Activated naive CD4-positive, alpha-beta T cell treated with anti-CD3 and anti-CD28 coated beads for 36 hours (primary cell): ENCODE measurements at regions of chr6 and their contacts with region 1.

Region 1: GRCh38 chr6:36623547-36624459 is 29.6 kb downstream of the SRSF3 start:
- DNase-seq: peak; percentile 91
- H3K4me3 Mint-ChIP-seq: no peak overlapping the region
- H3K27ac Mint-ChIP-seq: no peak overlapping the region
- H3K4me1 Mint-ChIP-seq: peaks cover 14% of the 10 kb centered on the region
- H3K27me3 Mint-ChIP-seq: no peaks in the 10 kb centered on the region

Region 2: GRCh38 chr6:36576561-36576960 is 47.2 kb before region 1 on chr6:
- CTCF ChIA-PET with region 1: no interaction called
- intact Hi-C with region 1: no loop called
- DNase-seq: no peak
- H3K4me3 Mint-ChIP-seq: no peak overlapping the region
- H3K27ac Mint-ChIP-seq: no peak overlapping the region
- H3K4me1 Mint-ChIP-seq: peaks cover 6% of the 10 kb centered on the region
- H3K27me3 Mint-ChIP-seq: no peaks in the 10 kb centered on the region

Region 3: GRCh38 chr6:36594029-36594815 is 29.6 kb before region 1 on chr6 and contains the start of gene SRSF3:
- CTCF ChIA-PET with region 1: no interaction called
- intact Hi-C with region 1: no loop called
- DNase-seq: peak; percentile 98
- H3K4me3 Mint-ChIP-seq: peak within 1 kb of the TSS; percentile 92
- H3K27ac Mint-ChIP-seq: peak within 1 kb of the TSS; percentile 98
- H3K4me1 Mint-ChIP-seq: peaks cover 31% of the 10 kb centered on the region
- H3K27me3 Mint-ChIP-seq: no peaks in the 10 kb centered on the region
- total RNA-seq, gene SRSF3: 250 to 269 TPM

Region 4: GRCh38 chr6:36724514-36725390 is 100.9 kb after region 1 on chr6:
- CTCF ChIA-PET with region 1: interaction called, 11 read pairs
- intact Hi-C with region 1: loop called (anchors 1 kb)
- DNase-seq: peak; percentile 88
- H3K4me3 Mint-ChIP-seq: no peak overlapping the region
- H3K27ac Mint-ChIP-seq: no peak overlapping the region
- H3K4me1 Mint-ChIP-seq: peaks cover 13% of the 10 kb centered on the region
- H3K27me3 Mint-ChIP-seq: no peaks in the 10 kb centered on the region

Region 5: GRCh38 chr6:36735110-36736071 is 111.6 kb after region 1 on chr6:
- CTCF ChIA-PET with region 1: interaction called, 3 read pairs
- intact Hi-C with region 1: loop called (anchors 1 kb)
- DNase-seq: peak; percentile 87
- H3K4me3 Mint-ChIP-seq: peak overlapping the region; percentile 59
- H3K27ac Mint-ChIP-seq: peak overlapping the region; percentile 91
- H3K4me1 Mint-ChIP-seq: peaks cover 28% of the 10 kb centered on the region
- H3K27me3 Mint-ChIP-seq: no peaks in the 10 kb centered on the region

Region 6: GRCh38 chr6:36780442-36781177 is 156.8 kb after region 1 on chr6:
- CTCF ChIA-PET with region 1: interaction called, 20 read pairs
- intact Hi-C with region 1: loop called (anchors 2 kb)
- DNase-seq: no peak
- H3K4me3 Mint-ChIP-seq: no peak overlapping the region
- H3K27ac Mint-ChIP-seq: no peak overlapping the region
- H3K4me1 Mint-ChIP-seq: no peaks in the 10 kb centered on the region
- H3K27me3 Mint-ChIP-seq: no peaks in the 10 kb centered on the region

Region 7: DNA sequence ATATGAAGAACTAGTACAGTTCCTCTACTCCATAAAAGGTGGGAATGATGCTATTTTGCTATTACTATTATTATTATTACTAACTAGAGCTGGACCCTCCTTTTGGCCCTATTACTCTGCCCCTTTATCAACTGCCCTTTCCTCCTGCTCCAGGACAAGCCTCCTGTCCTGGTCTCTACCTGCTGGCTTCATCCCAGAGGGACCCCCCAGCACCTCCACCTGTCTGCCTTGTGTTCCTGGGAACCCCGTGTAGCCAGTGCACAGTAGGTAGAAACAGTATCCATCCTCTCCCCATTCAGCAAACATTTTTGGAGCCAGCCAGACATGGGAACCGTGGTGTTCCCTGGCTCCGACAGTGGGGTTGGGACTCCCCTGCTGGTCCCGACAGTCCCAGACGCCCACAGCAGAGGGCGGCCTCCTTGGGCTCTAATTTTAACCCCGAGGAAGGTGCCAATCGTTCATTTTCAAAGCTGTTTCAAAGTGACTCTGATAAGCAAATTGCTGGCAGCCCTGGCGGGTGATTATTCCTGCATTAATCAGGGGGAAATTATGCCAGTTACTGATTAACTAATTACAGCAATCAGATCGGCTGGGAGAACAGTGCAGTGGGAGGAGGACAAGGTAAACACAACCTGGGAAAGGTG is 1118.1 kb after region 1 on chr6:
- CTCF ChIA-PET with region 1: no interaction called
- intact Hi-C with region 1: no loop called
- DNase-seq: peak; percentile 44
- H3K4me3 Mint-ChIP-seq: no peak overlapping the region
- H3K27ac Mint-ChIP-seq: no peak overlapping the region
- H3K4me1 Mint-ChIP-seq: no peaks in the 10 kb centered on the region
- H3K27me3 Mint-ChIP-seq: peaks cover 9% of the 10 kb centered on the region